T-cell (primary cell): ENCODE measurements at regions of chr5 and their contacts with region 1.

Region 1: GRCh38 chr5:158695595-158696330 is 404.0 kb downstream of the EBF1 start:
- DNase-seq: peak; percentile 6 to 80 (median 53)
- ATAC-seq: peak; percentile 77 to 80 (median 78)
- H3K4me3 ChIP-seq: no peak overlapping the region
- H3K4me3 Mint-ChIP-seq: no peak overlapping the region
- H3K27ac ChIP-seq: no peak overlapping the region
- H3K27ac Mint-ChIP-seq: no peak overlapping the region
- H3K4me1 ChIP-seq: no peaks in the 10 kb centered on the region
- H3K4me1 Mint-ChIP-seq: peaks cover 3 to 5% (median 4%) of the 10 kb centered on the region in 3 donors
- H3K27me3 ChIP-seq: peaks cover 0 to 2% of the 10 kb centered on the region in 2 experiments
- H3K27me3 Mint-ChIP-seq: peaks cover 0 to 6% of the 10 kb centered on the region in 2 donors

Region 2: DNA sequence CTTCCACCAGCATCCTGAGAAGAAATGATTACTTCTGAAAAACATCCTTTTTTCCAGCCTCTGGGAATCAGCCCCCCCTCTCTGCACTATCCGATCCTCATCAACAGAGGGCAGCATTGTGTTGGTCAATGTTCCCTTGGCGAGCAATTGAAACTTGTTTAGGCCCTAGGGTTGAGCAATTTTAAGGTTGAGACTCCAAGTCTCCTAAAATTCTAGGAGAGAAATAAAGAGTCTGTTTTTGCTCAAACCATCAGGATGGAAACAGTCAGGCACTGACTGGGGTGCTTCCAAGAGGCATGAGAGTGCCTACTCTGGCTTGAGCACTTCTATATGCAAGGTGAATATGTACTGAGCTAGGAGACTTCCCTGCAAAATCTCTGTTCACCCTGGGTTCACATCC is 1442.2 kb before region 1 on chr5:
- CTCF ChIA-PET with region 1: no interaction called
- POLR2A ChIA-PET with region 1: no interaction called
- DNase-seq: peak in 1 of 35 experiments; percentile 61
- ATAC-seq: no peak
- H3K4me3 ChIP-seq: no peak overlapping the region
- H3K4me3 Mint-ChIP-seq: peak overlapping the region; percentile 18 to 64 (median 53)
- H3K27ac ChIP-seq: peak overlapping the region; percentile 80
- H3K27ac Mint-ChIP-seq: peak overlapping the region; percentile 94 to 95
- H3K4me1 ChIP-seq: peaks cover 71 to 86% of the 10 kb centered on the region in 2 experiments
- H3K4me1 Mint-ChIP-seq: peaks cover 96 to 98% (median 97%) of the 10 kb centered on the region in 3 donors
- H3K27me3 ChIP-seq: no peaks in the 10 kb centered on the region
- H3K27me3 Mint-ChIP-seq: no peaks in the 10 kb centered on the region

Region 3: DNA sequence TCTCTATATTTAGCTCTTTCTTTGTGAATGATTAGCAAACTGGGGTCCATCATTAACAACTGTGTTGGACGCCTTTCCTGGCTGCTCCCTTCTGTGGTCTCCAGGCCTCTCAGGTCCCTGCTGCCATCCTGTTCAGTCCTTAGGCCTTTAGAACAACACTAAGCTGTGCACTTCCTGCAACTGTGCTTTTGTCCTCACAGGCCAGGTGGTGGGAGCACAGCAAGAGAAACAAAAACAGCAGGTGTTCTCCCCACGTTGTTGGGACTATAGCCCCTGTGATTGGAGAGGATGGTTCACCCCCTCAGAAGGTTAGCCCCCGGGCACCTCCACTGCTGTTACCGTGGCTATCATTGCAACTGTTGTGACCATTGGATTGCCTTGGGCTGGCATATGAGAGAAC is 795.1 kb before region 1 on chr5:
- CTCF ChIA-PET with region 1: interaction called in 1 of 2 experiments, 10 read pairs
- POLR2A ChIA-PET with region 1: no interaction called
- DNase-seq: no peak
- ATAC-seq: no peak
- H3K4me3 ChIP-seq: no peak overlapping the region
- H3K4me3 Mint-ChIP-seq: no peak overlapping the region
- H3K27ac ChIP-seq: no peak overlapping the region
- H3K27ac Mint-ChIP-seq: no peak overlapping the region
- H3K4me1 ChIP-seq: no peaks in the 10 kb centered on the region
- H3K4me1 Mint-ChIP-seq: no peaks in the 10 kb centered on the region
- H3K27me3 ChIP-seq: peaks cover 0 to 2% of the 10 kb centered on the region in 2 experiments
- H3K27me3 Mint-ChIP-seq: no peaks in the 10 kb centered on the region

Region 4: DNA sequence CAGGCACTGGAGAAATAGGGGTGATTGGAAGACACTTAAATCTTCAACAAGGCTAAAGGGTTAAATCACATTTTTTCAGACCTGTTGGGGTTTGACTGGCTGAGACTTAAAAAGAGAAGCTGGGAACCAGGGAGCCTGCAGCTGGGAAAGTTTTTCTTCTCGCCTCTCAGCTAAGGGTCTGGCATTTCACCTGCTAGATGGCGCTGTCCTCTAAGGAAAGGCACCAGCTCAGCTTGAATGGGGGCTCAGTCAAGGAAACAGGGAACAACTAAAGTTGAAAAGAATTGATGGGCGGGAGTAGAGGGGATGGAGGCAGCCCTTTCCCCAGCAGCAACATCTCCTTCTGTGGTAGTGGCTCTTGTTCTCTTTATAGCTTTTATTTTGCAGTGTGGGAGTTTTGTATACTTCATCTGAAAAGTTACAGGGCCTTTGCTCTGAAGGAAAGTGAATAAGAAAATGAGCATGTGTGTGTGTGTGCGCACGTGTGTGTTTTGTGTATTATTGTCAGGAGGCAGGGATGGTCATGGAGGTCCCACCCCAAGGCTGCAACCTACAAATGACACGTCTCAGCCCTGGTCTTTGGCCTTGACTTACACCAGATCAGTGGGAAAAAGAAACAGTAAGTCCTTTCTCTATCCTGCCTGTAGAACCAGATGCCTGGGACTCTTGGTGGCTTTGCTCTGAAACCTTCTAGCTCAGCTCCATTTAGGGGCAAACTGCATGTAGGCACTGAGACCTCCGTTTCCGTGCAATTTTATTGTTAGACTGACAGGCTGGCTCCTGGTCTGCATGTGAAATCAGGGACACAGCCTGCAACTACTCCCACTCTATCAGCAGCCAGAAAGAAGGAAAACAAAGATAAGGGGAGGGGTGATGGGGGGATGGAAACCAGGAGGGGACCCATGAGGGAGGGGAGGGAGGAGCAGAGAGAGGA is 520.6 kb before region 1 on chr5:
- CTCF ChIA-PET with region 1: interaction called, 9 to 22 read pairs
- POLR2A ChIA-PET with region 1: no interaction called
- DNase-seq: peak in 30 of 35 experiments; percentile 2 to 67 (median 33)
- ATAC-seq: peak; percentile 40 to 70 (median 50)
- H3K4me3 ChIP-seq: no peak overlapping the region
- H3K4me3 Mint-ChIP-seq: no peak overlapping the region
- H3K27ac ChIP-seq: no peak overlapping the region
- H3K27ac Mint-ChIP-seq: no peak overlapping the region
- H3K4me1 ChIP-seq: no peaks in the 10 kb centered on the region
- H3K4me1 Mint-ChIP-seq: no peaks in the 10 kb centered on the region
- H3K27me3 ChIP-seq: no peaks in the 10 kb centered on the region
- H3K27me3 Mint-ChIP-seq: peaks cover 0 to 8% of the 10 kb centered on the region in 2 donors

Region 5: DNA sequence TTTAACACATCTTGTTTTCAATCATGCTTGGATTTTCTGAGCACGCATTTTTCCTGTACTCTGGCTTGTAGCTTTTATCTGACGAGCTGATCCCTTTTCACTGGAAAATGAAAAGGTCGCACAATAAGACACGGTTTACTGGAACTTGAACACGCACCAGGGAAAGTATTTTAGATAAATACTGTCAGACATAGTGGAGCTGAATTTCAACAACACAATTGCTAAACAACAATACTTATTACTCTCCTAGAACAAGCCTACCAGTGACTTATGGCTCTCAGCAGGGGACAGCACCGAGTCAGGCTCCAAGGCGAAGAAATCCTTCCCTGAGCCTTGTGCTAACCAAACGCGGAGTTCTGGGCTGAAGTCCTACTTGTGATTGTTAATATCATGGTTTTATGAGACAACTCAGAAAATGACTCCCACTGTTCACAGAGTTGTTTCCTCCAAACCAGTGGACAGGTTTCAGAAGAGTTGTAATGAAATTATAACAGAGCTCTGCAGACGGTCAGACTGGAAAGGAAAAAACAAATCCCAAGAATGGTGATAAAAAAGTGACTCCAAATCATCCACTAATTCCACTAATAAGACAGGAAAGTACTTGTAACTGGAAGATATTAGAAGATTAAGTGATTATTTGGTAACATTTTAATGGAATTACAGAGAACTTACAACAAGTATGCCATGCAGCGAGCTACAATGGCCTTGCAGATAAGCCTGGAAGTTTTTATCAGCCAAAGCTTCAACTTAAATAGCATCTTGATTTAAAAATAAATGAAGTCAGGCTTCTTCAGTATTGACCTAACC is 44.4 kb after region 1 on chr5:
- CTCF ChIA-PET with region 1: no interaction called
- POLR2A ChIA-PET with region 1: interaction called in 1 of 2 experiments, 15 read pairs
- DNase-seq: no peak
- ATAC-seq: no peak
- H3K4me3 ChIP-seq: no peak overlapping the region
- H3K4me3 Mint-ChIP-seq: no peak overlapping the region
- H3K27ac ChIP-seq: no peak overlapping the region
- H3K27ac Mint-ChIP-seq: no peak overlapping the region
- H3K4me1 ChIP-seq: no peaks in the 10 kb centered on the region
- H3K4me1 Mint-ChIP-seq: no peaks in the 10 kb centered on the region
- H3K27me3 ChIP-seq: peaks cover 0 to 2% of the 10 kb centered on the region in 2 experiments
- H3K27me3 Mint-ChIP-seq: peaks cover 7 to 9% of the 10 kb centered on the region in 2 donors

Region 6: GRCh38 chr5:159106569-159107282 is 411.0 kb after region 1 on chr5:
- CTCF ChIA-PET with region 1: interaction called, 71 to 128 read pairs
- POLR2A ChIA-PET with region 1: no interaction called
- DNase-seq: peak in 31 of 35 experiments; percentile 32 to 81 (median 58)
- ATAC-seq: peak; percentile 65 to 83 (median 71)
- H3K4me3 ChIP-seq: peak overlapping the region; percentile 41 to 96
- H3K4me3 Mint-ChIP-seq: peak overlapping the region; percentile 77 to 81 (median 77)
- H3K27ac ChIP-seq: no peak overlapping the region
- H3K27ac Mint-ChIP-seq: no peak overlapping the region
- H3K4me1 ChIP-seq: peaks cover 16 to 26% of the 10 kb centered on the region in 2 experiments
- H3K4me1 Mint-ChIP-seq: peaks cover 27 to 32% (median 28%) of the 10 kb centered on the region in 3 donors
- H3K27me3 ChIP-seq: peaks cover 4 to 46% of the 10 kb centered on the region in 2 experiments
- H3K27me3 Mint-ChIP-seq: peaks cover 48 to 69% of the 10 kb centered on the region in 2 donors

Region 7: GRCh38 chr5:159112436-159112835 is 416.7 kb after region 1 on chr5:
- CTCF ChIA-PET with region 1: interaction called, 71 to 128 read pairs
- POLR2A ChIA-PET with region 1: no interaction called
- DNase-seq: no peak
- ATAC-seq: no peak
- H3K4me3 ChIP-seq: no peak overlapping the region
- H3K4me3 Mint-ChIP-seq: no peak overlapping the region
- H3K27ac ChIP-seq: no peak overlapping the region
- H3K27ac Mint-ChIP-seq: no peak overlapping the region
- H3K4me1 ChIP-seq: peaks cover 0 to 2% of the 10 kb centered on the region in 2 experiments
- H3K4me1 Mint-ChIP-seq: no peaks in the 10 kb centered on the region
- H3K27me3 ChIP-seq: peaks cover 0 to 8% of the 10 kb centered on the region in 2 experiments
- H3K27me3 Mint-ChIP-seq: peaks cover 14 to 37% of the 10 kb centered on the region in 2 donors

Region 8: DNA sequence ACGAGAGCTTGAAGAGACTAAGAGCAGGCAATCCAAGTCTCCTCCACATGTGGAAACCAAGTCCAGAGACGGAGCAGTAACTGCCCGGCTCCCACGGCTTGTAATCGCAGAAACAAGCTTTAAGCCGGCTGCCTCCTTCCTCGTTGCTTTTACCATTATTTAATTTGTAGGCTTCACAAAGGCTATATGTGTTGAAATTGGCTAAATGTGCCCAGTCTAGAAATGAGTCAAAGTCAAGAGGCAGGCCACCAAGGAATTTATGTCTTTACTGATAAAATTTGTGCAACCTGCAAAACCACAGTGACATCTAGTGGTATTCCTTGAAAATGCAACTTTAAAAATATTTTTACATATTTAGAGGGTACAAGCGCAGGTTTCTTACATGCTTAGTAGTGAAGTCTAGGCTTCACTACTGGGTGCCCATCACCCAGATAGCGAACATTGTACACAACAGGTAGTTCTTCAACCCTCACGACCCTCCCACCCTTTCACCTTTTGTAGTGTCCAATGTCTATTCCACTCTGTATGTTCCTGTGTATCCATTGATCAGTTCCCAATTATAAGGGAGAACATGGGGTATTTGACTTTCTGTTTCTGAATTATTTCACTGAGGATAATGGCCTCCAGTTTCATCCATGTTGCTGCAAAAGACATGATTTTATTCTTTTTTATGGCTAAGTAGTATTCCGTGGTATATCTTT is 437.4 kb after region 1 on chr5:
- CTCF ChIA-PET with region 1: interaction called, 31 to 62 read pairs
- POLR2A ChIA-PET with region 1: no interaction called
- DNase-seq: peak in 2 of 35 experiments; percentile 10 to 65
- ATAC-seq: peak in 3 of 4 experiments; percentile 30 to 35 (median 32)
- H3K4me3 ChIP-seq: no peak overlapping the region
- H3K4me3 Mint-ChIP-seq: no peak overlapping the region
- H3K27ac ChIP-seq: no peak overlapping the region
- H3K27ac Mint-ChIP-seq: no peak overlapping the region
- H3K4me1 ChIP-seq: no peaks in the 10 kb centered on the region
- H3K4me1 Mint-ChIP-seq: no peaks in the 10 kb centered on the region
- H3K27me3 ChIP-seq: no peaks in the 10 kb centered on the region
- H3K27me3 Mint-ChIP-seq: peaks cover 7 to 13% of the 10 kb centered on the region in 2 donors

Region 9: GRCh38 chr5:159218595-159219023 is 522.8 kb after region 1 on chr5:
- CTCF ChIA-PET with region 1: no interaction called
- POLR2A ChIA-PET with region 1: no interaction called
- DNase-seq: no peak
- ATAC-seq: no peak
- H3K4me3 ChIP-seq: no peak overlapping the region
- H3K4me3 Mint-ChIP-seq: no peak overlapping the region
- H3K27ac ChIP-seq: no peak overlapping the region
- H3K27ac Mint-ChIP-seq: no peak overlapping the region
- H3K4me1 ChIP-seq: peaks cover 0 to 2% of the 10 kb centered on the region in 2 experiments
- H3K4me1 Mint-ChIP-seq: peaks cover 0 to 3% (median 2%) of the 10 kb centered on the region in 3 donors
- H3K27me3 ChIP-seq: no peaks in the 10 kb centered on the region
- H3K27me3 Mint-ChIP-seq: peaks cover 0 to 2% of the 10 kb centered on the region in 2 donors